ENCODE measurements at regions of chr12 and their contacts with region 1.

Region 1: DNA sequence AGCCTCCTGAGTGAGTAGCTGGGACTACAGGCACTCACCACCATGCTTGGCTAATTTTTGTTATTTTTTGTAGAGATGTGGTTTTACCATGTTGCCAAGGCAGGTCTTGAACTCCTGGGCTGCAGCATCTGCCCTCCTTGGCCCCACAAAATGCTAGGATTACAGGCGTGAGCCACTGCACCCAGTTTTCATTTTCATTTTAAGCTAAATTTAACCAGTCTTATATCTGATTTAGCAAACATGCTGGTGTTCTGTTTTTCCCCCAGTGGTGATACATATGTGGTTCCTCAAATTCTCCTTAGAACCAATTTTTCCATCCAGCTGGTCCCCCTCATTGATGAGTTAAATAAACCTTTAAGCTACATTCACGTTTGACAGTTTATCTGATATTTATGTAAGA is 43.8 kb upstream of the BICD1 start:
- DNase-seq: no peak
- ATAC-seq: no peak
- H3K4me3 ChIP-seq: no peak overlapping the region
- H3K4me3 Mint-ChIP-seq: no peak overlapping the region
- H3K27ac ChIP-seq: no peak overlapping the region
- H3K27ac Mint-ChIP-seq: no peak overlapping the region
- H3K4me1 ChIP-seq: peaks cover 5% of the 10 kb centered on the region
- H3K4me1 Mint-ChIP-seq: peaks cover 0 to 4% of the 10 kb centered on the region in 2 donors
- H3K27me3 ChIP-seq: no peaks in the 10 kb centered on the region
- H3K27me3 Mint-ChIP-seq: peaks cover 0 to 4% of the 10 kb centered on the region in 2 donors
- CTCF ChIP-seq: no peak

Region 2: DNA sequence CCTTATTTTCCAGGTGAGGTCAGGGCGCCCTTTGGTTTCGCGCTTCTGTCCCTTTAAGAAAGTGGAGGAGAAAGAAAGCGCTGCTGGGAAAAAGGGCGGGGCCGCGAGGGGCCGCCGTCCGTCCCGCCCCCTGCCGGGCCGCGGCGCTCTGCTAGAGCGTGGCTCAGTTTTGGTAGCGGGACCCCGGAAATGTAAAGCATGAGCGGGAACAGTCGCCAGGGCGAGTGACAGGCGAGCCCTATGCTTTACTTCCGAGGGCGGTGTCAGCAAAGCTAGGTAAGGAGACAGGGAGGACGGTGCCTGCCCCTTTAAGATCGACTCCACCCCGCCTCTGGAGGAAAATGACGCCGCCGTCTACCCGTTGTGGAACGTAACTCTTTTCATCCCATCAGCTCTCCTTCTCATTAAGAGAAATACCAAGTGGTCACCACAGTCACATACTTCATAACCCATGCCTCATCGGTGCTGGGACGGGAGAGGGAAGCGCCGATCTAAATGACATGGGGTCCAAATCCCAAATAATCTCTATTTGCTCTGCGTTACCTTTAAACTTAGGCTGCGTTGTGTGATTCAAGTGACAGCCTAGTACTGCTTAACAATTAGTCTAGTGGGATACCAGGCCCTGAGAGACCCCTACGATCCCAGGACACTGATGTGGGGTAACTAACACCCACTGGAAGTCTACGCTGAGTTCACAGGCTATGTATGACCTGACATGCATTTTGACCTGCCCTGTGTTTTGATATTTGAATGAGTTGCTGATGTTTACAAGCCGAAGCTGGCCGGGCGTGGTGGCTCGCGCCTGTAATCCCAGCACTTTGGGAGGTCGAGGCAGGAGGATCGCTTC is 403.6 kb before region 1 on chr12 and contains the start of gene ETFBKMT:
- intact Hi-C with region 1: loop called (anchors 5 kb)
- DNase-seq: peak; percentile 80 to 96
- ATAC-seq: peak; percentile 91 to 96 (median 94)
- H3K4me3 ChIP-seq: peak within 1 kb of the TSS; percentile 48
- H3K4me3 Mint-ChIP-seq: peak within 1 kb of the TSS; percentile 93
- H3K27ac ChIP-seq: peak within 1 kb of the TSS; percentile 84
- H3K27ac Mint-ChIP-seq: peak within 1 kb of the TSS; percentile 91 to 93
- H3K4me1 ChIP-seq: peaks cover 12% of the 10 kb centered on the region
- H3K4me1 Mint-ChIP-seq: peaks cover 6 to 12% of the 10 kb centered on the region in 2 donors
- H3K27me3 ChIP-seq: no peaks in the 10 kb centered on the region
- H3K27me3 Mint-ChIP-seq: no peaks in the 10 kb centered on the region
- CTCF ChIP-seq: peak; percentile 19
- total RNA-seq, gene ETFBKMT: 1.2 to 1.9 (median 1.2) TPM

Region 3: DNA sequence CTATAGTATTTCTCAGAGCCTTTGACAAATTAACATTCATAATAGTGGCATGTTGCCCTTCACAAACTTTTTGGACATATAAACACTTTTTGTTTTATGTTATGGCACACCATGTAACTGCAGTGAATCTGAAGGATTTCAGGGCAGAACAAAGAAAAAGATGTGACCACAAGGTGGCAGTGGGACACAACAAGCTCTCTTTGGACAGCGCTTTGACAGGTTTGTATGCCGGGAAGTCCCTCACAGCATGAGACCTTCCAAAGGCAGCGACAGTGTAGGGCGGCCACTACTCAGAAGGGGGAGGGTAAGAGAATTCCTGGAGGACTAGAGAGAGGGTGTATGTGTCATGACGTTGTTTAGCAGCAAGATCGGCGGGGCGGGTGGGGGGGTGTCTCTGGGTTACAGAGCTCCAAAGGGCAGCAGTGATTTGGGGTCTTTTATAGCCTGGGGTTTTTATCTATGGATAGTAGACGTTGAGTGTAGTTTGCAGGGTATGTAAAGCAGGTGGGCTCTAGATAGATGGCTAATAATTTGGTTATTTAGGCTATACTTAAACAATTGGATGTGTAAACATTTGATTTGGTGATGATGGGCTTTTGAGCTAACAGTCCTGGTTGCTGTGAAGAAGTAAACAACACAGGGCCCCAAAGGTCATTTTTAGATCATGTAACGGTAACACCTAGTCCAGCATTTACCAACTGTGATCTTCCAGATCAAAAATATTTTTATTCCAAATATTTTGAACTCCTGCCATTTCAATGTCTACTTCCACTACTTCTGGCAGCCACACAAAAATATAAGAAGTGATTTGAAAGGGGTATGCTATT is 380.5 kb before region 1 on chr12:
- intact Hi-C with region 1: loop called (anchors 1 kb)
- DNase-seq: peak; percentile 47 to 91
- ATAC-seq: peak; percentile 93 to 99 (median 93)
- H3K4me3 ChIP-seq: no peak overlapping the region
- H3K4me3 Mint-ChIP-seq: no peak overlapping the region
- H3K27ac ChIP-seq: peak overlapping the region; percentile 8
- H3K27ac Mint-ChIP-seq: peak overlapping the region; percentile 34 to 84
- H3K4me1 ChIP-seq: peaks cover 9% of the 10 kb centered on the region
- H3K4me1 Mint-ChIP-seq: peaks cover 4 to 16% of the 10 kb centered on the region in 2 donors
- H3K27me3 ChIP-seq: no peaks in the 10 kb centered on the region
- H3K27me3 Mint-ChIP-seq: no peaks in the 10 kb centered on the region
- CTCF ChIP-seq: peak; percentile 74

Region 4: GRCh38 chr12:32312049-32312670 is 249.3 kb after region 1 on chr12:
- intact Hi-C with region 1: loop called (anchors 1 kb)
- DNase-seq: peak in 1 of 2 donors; percentile 71
- ATAC-seq: peak; percentile 48 to 59 (median 57)
- H3K4me3 ChIP-seq: no peak overlapping the region
- H3K4me3 Mint-ChIP-seq: no peak overlapping the region
- H3K27ac ChIP-seq: no peak overlapping the region
- H3K27ac Mint-ChIP-seq: no peak overlapping the region
- H3K4me1 ChIP-seq: no peaks in the 10 kb centered on the region
- H3K4me1 Mint-ChIP-seq: no peaks in the 10 kb centered on the region
- H3K27me3 ChIP-seq: no peaks in the 10 kb centered on the region
- H3K27me3 Mint-ChIP-seq: no peaks in the 10 kb centered on the region
- CTCF ChIP-seq: peak; percentile 58